ENCODE measurements at regions of chr17 and their contacts with region 1.

Region 1: DNA sequence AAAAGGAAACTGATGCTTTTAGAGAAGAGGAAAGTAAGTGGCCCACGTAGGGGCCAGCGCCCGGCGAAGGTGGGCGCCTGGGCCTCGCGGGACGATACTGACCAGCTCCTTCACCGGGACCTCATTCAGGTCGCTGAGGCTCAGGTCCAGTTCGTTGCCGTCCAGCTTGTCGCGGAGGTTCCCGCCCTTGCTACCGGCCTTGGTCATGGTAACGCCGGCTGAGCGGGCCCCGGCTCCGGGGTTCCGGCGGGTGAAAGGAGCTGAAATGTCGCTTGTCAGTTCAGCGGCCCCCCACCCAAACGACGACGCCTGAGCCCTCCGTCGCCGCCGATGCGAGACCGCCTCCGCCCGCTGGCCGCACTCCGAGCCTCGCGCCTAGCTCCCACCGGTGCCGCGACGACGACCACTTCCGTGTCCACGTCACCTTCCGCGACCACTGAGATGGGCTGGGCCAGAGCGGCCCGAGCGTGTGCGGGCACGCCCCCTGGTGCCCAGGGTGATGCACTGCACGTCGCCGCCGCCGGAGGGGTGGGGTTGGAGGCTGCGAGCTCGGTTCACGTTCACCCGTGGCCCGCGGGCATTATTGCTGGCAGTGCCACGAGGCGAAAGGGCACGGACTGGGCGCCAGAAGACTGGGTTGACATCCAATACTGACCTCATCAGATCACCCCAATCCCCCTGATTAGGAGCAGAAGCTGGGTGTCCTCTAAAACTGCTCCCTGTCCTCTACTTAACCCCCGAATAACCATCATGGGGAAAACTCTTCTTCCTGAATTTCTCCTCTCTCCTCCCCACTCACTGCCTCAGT is at the start of gene LRRC59:
- DNase-seq: peak; percentile 90
- H3K4me3 ChIP-seq: peak within 1 kb of the TSS; percentile 84
- H3K27ac ChIP-seq: peak within 1 kb of the TSS; percentile 4
- H3K4me1 ChIP-seq: peaks cover 24% of the 10 kb centered on the region
- CTCF ChIP-seq: peak; percentile 82
- total RNA-seq, gene LRRC59: 81.9 and 87.4 TPM in 2 replicates

Region 2: GRCh38 chr17:50326831-50327364 is 70.4 kb before region 1 on chr17:
- CTCF ChIA-PET with region 1: no interaction called
- POLR2A ChIA-PET with region 1: no interaction called
- intact Hi-C with region 1: no loop called
- DNase-seq: no peak
- H3K4me3 ChIP-seq: no peak overlapping the region
- H3K27ac ChIP-seq: no peak overlapping the region
- H3K4me1 ChIP-seq: peaks cover 5% of the 10 kb centered on the region
- CTCF ChIP-seq: no peak

Region 3: DNA sequence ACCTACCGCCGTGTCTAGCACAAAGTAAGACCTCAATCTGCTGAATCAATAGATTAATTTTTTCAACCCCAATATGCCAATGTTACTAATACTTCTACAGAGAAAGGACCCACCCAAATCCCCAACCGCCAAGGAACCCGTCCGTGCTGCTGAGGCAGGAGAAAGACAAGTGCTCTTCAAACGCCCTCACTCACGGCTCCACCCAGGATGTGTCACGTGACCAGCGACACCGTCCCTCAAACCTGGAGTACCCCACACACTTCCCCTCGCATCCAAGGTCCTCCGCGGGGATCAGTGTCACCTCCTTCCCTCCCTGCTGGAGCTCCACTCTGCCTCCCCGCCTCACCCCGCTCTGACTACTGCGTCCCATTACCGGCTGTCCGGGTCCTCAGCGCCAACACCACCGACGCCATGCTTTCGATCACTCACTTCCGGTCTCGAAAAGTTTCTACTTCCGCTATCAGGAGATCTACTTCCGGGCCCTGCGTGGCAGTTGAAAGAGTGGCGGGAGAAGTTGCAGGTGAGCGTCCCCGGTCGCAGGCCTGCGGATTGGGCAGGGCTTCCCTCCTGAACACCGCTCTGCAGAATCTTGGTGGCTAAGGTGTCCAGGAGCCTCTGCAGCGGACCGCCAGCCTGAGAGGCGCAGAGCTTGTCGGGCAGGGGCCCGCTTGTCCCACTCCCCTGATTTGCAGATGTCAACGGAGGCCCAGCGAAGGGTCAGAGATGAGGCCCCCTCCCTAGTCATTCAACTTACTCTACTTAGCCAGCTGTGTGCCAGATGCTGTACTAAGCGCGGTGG is 24.4 kb before region 1 on chr17 and contains the starts of genes EME1 and MRPL27:
- CTCF ChIA-PET with region 1: interaction called, 4 read pairs
- POLR2A ChIA-PET with region 1: interaction called, 33 read pairs
- intact Hi-C with region 1: loop called (anchors 1 kb)
- DNase-seq: peak; percentile 95
- H3K4me3 ChIP-seq: peak within 1 kb of the TSS; percentile 91
- H3K27ac ChIP-seq: peak within 1 kb of the TSS; percentile 83
- H3K4me1 ChIP-seq: peaks cover 15% of the 10 kb centered on the region
- CTCF ChIP-seq: no peak
- total RNA-seq, gene EME1: 25.2 and 34.0 TPM in 2 replicates
- total RNA-seq, gene MRPL27: 80.2 and 85.1 TPM in 2 replicates

Region 4: DNA sequence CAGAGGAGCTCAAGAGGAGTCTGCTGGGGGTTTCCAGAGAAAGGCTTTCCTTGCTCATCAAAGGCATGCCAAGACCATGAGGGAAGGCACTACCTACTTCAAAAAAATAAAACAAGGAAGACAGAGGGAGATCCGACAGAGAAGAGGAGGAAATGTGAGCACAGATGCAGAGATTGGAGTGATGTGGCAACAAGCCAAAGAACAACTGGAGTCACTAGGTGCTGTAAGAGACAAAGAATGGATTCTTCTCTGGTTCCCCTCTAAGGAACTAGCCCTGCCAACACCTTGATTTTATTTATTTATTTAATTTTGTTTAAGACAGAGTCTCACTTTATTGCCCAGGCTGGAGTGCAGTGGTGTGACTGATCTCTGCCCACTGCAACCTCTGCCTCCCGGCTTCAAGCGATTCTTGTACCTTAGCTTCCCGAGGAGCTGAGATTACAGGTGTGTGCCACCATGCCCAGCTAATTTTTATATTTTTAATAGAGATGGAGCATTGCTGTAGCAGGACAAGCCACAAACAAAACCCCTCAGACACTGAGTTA is 14.9 kb after region 1 on chr17:
- CTCF ChIA-PET with region 1: no interaction called
- POLR2A ChIA-PET with region 1: no interaction called
- intact Hi-C with region 1: no loop called
- DNase-seq: no peak
- H3K4me3 ChIP-seq: no peak overlapping the region
- H3K27ac ChIP-seq: no peak overlapping the region
- H3K4me1 ChIP-seq: no peaks in the 10 kb centered on the region
- CTCF ChIP-seq: no peak

Region 5: GRCh38 chr17:50425682-50426471 is 28.6 kb after region 1 on chr17 and contains the start of gene ACSF2:
- CTCF ChIA-PET with region 1: interaction called, 6 read pairs
- POLR2A ChIA-PET with region 1: interaction called, 12 read pairs
- intact Hi-C with region 1: no loop called
- DNase-seq: peak; percentile 67
- H3K4me3 ChIP-seq: peak within 1 kb of the TSS; percentile 76
- H3K27ac ChIP-seq: peak within 1 kb of the TSS; percentile 54
- H3K4me1 ChIP-seq: peaks cover 36% of the 10 kb centered on the region
- CTCF ChIP-seq: no peak
- total RNA-seq, gene ACSF2: 38.6 and 48.1 TPM in 2 replicates